ENCODE measurements at regions of chr12 and their contacts with region 1.

Region 1: DNA sequence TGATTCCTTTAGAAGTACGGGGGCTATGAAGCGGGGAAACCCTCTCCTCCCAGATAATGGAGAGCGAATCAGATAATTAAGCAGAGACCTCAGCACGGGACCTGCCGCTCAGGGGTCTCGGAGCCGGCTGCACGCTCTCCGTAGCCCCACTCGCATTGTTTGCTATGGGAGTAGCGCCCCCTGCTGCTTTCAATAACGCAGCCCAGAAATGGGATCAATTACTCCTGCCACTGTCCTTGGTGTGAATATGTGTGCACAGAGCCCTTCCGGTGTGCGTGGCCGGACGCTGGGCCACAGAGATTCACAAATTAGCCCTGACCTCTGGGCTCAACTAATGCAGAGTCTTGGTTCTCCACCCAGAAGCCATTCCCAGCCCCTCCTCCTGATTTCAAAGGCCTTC is 76.4 kb upstream of the TMEM132C start:
- ATAC-seq: peak in 4 of 8 experiments; percentile 87 to 99 (median 88)
- H3K4me3 ChIP-seq: no peak overlapping the region
- H3K27ac ChIP-seq: no peak overlapping the region
- H3K4me1 ChIP-seq: no peaks in the 10 kb centered on the region

Region 2: GRCh38 chr12:127925971-127926370 is 264.6 kb before region 1 on chr12:
- in situ Hi-C with region 1: loop called in 1 of 9 experiments (anchors 25 kb)
- ATAC-seq: peak in 6 of 8 experiments; percentile 73 to 97 (median 80)
- H3K4me3 ChIP-seq: no peak overlapping the region
- H3K27ac ChIP-seq: no peak overlapping the region
- H3K4me1 ChIP-seq: no peaks in the 10 kb centered on the region

Region 3: DNA sequence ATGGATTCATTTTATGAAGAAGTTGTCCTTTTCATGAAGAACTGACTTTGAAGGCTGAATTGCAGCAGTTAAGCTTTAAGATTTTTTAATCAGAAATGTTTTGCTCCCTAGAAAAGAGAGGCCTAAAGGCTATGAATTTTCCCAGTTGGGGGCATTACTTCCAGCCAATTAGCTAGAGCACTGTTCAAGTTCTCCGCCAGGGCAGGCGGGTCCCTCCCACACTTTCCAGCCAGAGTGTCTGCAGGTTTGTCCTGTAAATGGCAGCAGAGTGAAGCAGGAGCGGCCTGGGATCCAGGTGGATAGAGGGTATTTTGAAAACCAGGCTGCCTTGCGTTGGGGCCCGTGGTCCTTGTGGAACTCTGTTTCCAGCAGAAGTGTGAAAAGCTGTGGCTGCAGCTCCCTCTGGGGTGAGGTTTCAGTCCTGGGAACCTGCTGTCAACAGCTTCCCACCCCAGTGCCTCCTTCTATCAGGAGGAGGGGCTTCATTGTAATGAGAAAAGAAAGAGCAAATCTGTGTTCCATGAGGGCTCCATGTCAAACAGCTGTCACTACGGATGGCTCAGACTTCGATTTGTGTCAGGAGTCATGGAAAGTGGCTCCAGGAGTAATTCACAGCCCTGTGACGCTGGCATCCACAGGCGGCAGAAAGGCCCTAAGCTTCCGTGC is 134.3 kb before region 1 on chr12:
- in situ Hi-C with region 1: no loop called
- ATAC-seq: peak in 3 of 8 experiments; percentile 46 to 84 (median 75)
- H3K4me3 ChIP-seq: no peak overlapping the region
- H3K27ac ChIP-seq: no peak overlapping the region
- H3K4me1 ChIP-seq: peaks cover 0 to 10% of the 10 kb centered on the region in 2 donors

Region 4: GRCh38 chr12:128250096-128250495 is 59.5 kb after region 1 on chr12:
- in situ Hi-C with region 1: no loop called
- ATAC-seq: no peak
- H3K4me3 ChIP-seq: no peak overlapping the region
- H3K27ac ChIP-seq: no peak overlapping the region
- H3K4me1 ChIP-seq: no peaks in the 10 kb centered on the region

Region 5: GRCh38 chr12:128483526-128484255 is 293.1 kb after region 1 on chr12:
- in situ Hi-C with region 1: no loop called
- ATAC-seq: no peak
- H3K4me3 ChIP-seq: no peak overlapping the region
- H3K27ac ChIP-seq: no peak overlapping the region
- H3K4me1 ChIP-seq: no peaks in the 10 kb centered on the region